MCF 10A (cell line): ENCODE measurements at regions of chr13 and their contacts with region 1.

Region 1: DNA sequence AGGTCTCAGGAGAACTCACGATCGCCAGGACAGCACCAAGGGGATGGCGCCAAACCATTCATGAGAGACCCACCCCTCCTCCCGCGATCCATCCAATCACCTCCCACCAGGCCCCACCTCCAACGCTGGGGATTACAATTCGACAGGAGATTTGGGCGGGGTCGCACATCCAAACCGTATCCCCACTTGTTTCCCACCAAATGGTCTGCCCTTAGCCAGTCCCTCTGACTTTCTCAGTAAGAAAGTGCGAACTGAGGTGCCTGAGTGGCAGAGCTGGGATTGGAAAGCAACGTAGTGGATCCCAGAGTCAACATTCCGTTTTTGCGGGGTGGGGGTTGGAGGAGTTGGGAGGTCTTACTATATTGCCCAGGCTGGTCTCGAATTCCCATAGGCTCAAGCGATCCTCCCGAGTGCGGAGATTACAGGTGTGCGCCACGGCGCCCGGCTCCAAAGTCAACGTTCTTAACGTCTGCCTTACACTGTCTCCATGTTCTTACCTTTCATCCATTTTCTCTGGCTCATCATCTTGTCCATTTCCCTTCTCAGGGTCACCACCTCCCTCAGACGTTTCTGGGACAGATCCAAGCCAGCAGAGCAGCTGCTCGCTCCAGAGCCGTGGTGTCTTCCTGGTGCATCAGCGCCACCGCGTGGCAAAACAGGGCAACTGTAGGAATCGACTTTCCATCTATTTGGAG is 102.7 kb upstream of the ABCC4 start:
- DNase-seq: peak; percentile 88
- H3K4me3 Mint-ChIP-seq: peak overlapping the region; percentile 53
- H3K27ac Mint-ChIP-seq: no peak overlapping the region
- H3K4me1 Mint-ChIP-seq: peaks cover 6% of the 10 kb centered on the region
- H3K27me3 Mint-ChIP-seq: no peaks in the 10 kb centered on the region
- CTCF ChIP-seq: peak; percentile 99

Region 2: DNA sequence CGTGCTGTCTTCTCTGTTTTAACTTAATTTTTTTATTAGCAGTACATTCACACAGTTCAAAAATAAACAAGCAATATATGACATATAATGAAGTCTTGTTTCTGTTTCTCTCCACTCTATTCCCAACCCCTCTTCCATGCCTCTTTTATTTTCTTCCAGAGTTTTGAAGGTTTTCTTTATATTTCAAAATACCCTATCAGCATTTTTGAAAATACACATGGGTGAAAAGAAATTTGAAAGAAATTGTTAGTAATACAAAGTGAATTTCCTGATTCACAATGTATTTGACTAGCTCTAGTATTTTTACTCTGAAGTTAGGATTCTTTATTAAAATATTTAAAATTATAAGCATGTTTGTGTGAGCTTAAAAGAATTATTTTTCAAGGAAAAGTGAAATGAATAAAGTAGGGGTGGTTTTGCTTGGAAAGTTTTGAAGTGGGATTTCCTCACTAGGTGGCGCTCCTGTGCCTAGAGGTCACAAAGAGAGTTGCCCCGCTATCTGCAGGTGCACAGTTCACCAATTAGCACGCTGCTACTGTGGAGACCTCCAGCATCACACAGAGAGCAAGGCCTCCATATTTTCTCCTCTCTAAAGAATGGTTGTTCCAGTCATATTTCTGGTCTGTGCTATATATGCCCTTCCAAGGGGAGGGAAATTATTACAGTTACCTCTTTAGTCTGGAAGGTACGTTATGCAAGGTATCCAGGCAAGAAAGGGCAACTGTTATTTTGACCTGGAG is 729.2 kb before region 1 on chr13:
- CTCF ChIA-PET with region 1: no interaction called
- POLR2A ChIA-PET with region 1: no interaction called
- intact Hi-C with region 1: loop called (anchors 2 kb)
- DNase-seq: peak; percentile 69
- H3K4me3 Mint-ChIP-seq: no peak overlapping the region
- H3K27ac Mint-ChIP-seq: no peak overlapping the region
- H3K4me1 Mint-ChIP-seq: no peaks in the 10 kb centered on the region
- H3K27me3 Mint-ChIP-seq: no peaks in the 10 kb centered on the region
- CTCF ChIP-seq: peak; percentile 70

Region 3: GRCh38 chr13:95003019-95003813 is 400.8 kb before region 1 on chr13:
- CTCF ChIA-PET with region 1: no interaction called
- POLR2A ChIA-PET with region 1: no interaction called
- intact Hi-C with region 1: no loop called
- DNase-seq: no peak
- H3K4me3 Mint-ChIP-seq: no peak overlapping the region
- H3K27ac Mint-ChIP-seq: no peak overlapping the region
- H3K4me1 Mint-ChIP-seq: peaks cover 9% of the 10 kb centered on the region
- H3K27me3 Mint-ChIP-seq: no peaks in the 10 kb centered on the region
- CTCF ChIP-seq: no peak

Region 4: GRCh38 chr13:95201814-95202651 is 201.9 kb before region 1 on chr13:
- CTCF ChIA-PET with region 1: interaction called, 12 read pairs
- POLR2A ChIA-PET with region 1: no interaction called
- intact Hi-C with region 1: no loop called
- DNase-seq: no peak
- H3K4me3 Mint-ChIP-seq: no peak overlapping the region
- H3K27ac Mint-ChIP-seq: no peak overlapping the region
- H3K4me1 Mint-ChIP-seq: no peaks in the 10 kb centered on the region
- H3K27me3 Mint-ChIP-seq: no peaks in the 10 kb centered on the region
- CTCF ChIP-seq: no peak

Region 5: DNA sequence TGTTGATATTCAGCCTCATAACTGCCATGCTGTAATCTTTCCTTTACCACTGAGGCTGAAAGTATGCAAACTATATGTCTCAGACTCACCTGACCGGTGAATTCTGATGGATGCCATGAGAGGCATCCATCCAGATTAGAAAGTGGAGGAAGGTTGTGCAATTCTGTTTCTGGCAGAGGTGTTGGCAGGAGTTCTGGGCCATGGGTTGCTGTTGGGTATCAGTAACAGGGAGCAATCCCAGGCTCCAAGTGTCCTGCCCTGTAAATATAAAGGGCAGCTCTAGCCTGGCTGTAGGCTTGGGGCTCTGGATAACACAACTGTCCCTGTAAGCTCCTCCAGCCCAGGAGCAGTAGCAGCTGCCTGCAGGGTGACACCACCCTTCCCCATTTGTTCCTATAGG is 25.4 kb before region 1 on chr13:
- CTCF ChIA-PET with region 1: interaction called, 172 read pairs
- POLR2A ChIA-PET with region 1: interaction called, 3 read pairs
- intact Hi-C with region 1: loop called (anchors 1 kb)
- DNase-seq: peak; percentile 54
- H3K4me3 Mint-ChIP-seq: no peak overlapping the region
- H3K27ac Mint-ChIP-seq: no peak overlapping the region
- H3K4me1 Mint-ChIP-seq: peaks cover 6% of the 10 kb centered on the region
- H3K27me3 Mint-ChIP-seq: peaks cover 14% of the 10 kb centered on the region
- CTCF ChIP-seq: no peak

Region 6: DNA sequence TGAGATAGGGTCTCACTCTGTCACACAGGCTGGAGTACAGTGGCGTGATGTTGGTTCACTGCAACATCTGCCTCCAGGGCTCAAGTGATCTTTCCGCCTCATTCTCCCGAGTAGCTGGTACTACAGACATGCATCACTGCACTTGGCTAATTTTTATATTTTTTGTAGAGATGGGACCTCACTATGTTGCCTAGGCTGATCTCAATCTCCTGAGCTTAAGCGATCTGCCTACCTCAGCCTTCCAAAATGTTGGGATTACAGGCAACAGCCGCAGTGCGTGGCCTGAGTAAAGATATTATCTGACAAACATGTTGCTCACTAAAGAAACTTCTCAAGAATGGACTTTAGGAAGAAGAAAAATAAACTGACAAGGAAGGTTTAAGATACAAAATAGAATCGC is 22.7 kb after region 1 on chr13:
- CTCF ChIA-PET with region 1: interaction called, 104 read pairs
- POLR2A ChIA-PET with region 1: no interaction called
- intact Hi-C with region 1: no loop called
- DNase-seq: no peak
- H3K4me3 Mint-ChIP-seq: no peak overlapping the region
- H3K27ac Mint-ChIP-seq: no peak overlapping the region
- H3K4me1 Mint-ChIP-seq: no peaks in the 10 kb centered on the region
- H3K27me3 Mint-ChIP-seq: no peaks in the 10 kb centered on the region
- CTCF ChIP-seq: no peak

Region 7: GRCh38 chr13:95924389-95924994 is 520.5 kb after region 1 on chr13:
- CTCF ChIA-PET with region 1: no interaction called
- POLR2A ChIA-PET with region 1: no interaction called
- intact Hi-C with region 1: no loop called
- DNase-seq: peak; percentile 89
- H3K4me3 Mint-ChIP-seq: no peak overlapping the region
- H3K27ac Mint-ChIP-seq: peak overlapping the region; percentile 59
- H3K4me1 Mint-ChIP-seq: peaks cover 7% of the 10 kb centered on the region
- H3K27me3 Mint-ChIP-seq: no peaks in the 10 kb centered on the region
- CTCF ChIP-seq: no peak

Region 8: GRCh38 chr13:96744367-96745331 is 1340.7 kb after region 1 on chr13:
- CTCF ChIA-PET with region 1: no interaction called
- POLR2A ChIA-PET with region 1: no interaction called
- intact Hi-C with region 1: no loop called
- DNase-seq: peak; percentile 12
- H3K4me3 Mint-ChIP-seq: no peak overlapping the region
- H3K27ac Mint-ChIP-seq: no peak overlapping the region
- H3K4me1 Mint-ChIP-seq: no peaks in the 10 kb centered on the region
- H3K27me3 Mint-ChIP-seq: no peaks in the 10 kb centered on the region
- CTCF ChIP-seq: no peak

Region 9: GRCh38 chr13:97018029-97018831 is 1614.3 kb after region 1 on chr13:
- CTCF ChIA-PET with region 1: interaction called, 3 read pairs
- POLR2A ChIA-PET with region 1: no interaction called
- intact Hi-C with region 1: loop called (anchors 1 kb)
- DNase-seq: peak; percentile 80
- H3K4me3 Mint-ChIP-seq: peak overlapping the region; percentile 11
- H3K27ac Mint-ChIP-seq: no peak overlapping the region
- H3K4me1 Mint-ChIP-seq: no peaks in the 10 kb centered on the region
- H3K27me3 Mint-ChIP-seq: peaks cover 27% of the 10 kb centered on the region
- CTCF ChIP-seq: peak; percentile 89

Region 10: GRCh38 chr13:97359181-97360057 is 1955.4 kb after region 1 on chr13:
- CTCF ChIA-PET with region 1: interaction called, 6 read pairs
- POLR2A ChIA-PET with region 1: no interaction called
- intact Hi-C with region 1: loop called (anchors 10 kb)
- DNase-seq: peak; percentile 87
- H3K4me3 Mint-ChIP-seq: no peak overlapping the region
- H3K27ac Mint-ChIP-seq: peak overlapping the region; percentile 49
- H3K4me1 Mint-ChIP-seq: no peaks in the 10 kb centered on the region
- H3K27me3 Mint-ChIP-seq: no peaks in the 10 kb centered on the region
- CTCF ChIP-seq: peak; percentile 96